HepG2 (cell line): ENCODE measurements at regions of chr6 and their contacts with region 1.

Region 1: GRCh38 chr6:33711140-33712129 is at the start of gene UQCC2:
- DNase-seq: peak; percentile 95
- ATAC-seq: peak; percentile 94
- H3K4me3 ChIP-seq: peak within 1 kb of the TSS; percentile 75 to 83 (median 75)
- H3K27ac ChIP-seq: peak within 1 kb of the TSS; percentile 93
- H3K4me1 ChIP-seq: peaks cover 63% of the 10 kb centered on the region
- H3K27me3 ChIP-seq: no peaks in the 10 kb centered on the region; a peak in 1 of 5 replicates
- CTCF ChIP-seq: peak; percentile 98
- EP300 ChIP-seq: no peak
- POLR2A ChIP-seq: peak; percentile 85 to 96
- RAD21 ChIP-seq: peak; percentile 97
- total RNA-seq, gene UQCC2: 238 and 273 TPM in 2 replicates

Region 2: DNA sequence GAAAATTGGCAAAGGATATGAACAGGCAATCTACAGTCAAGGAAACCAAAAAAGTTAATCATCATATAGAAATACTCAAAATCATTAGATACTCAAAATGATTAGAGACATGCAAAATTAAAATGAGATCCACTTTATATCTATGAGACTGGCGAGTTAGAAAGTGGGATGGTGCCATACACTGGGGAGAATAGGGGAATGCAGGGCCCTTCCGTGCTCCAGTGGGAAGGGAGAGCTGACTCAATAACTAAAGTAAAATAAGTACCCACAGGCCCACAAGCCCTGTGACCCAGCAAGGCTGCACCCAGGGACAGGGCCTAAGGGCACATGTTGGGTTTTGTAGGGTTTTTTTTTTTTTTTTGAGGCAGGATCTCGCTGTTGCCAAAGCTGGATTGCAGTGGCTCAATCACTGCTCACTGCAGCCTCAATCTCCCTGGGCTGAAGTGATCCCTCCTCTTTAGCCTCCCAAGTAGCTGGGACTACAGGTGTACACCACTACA is 176.3 kb before region 1 on chr6:
- CTCF ChIA-PET with region 1: no interaction called
- POLR2A ChIA-PET with region 1: no interaction called
- in situ Hi-C with region 1: no loop called
- intact Hi-C with region 1: no loop called
- DNase-seq: no peak
- ATAC-seq: peak; percentile 26; the same call in 1 of the 3 replicates
- H3K4me3 ChIP-seq: no peak overlapping the region
- H3K27ac ChIP-seq: no peak overlapping the region
- H3K4me1 ChIP-seq: peaks cover 34% of the 10 kb centered on the region
- H3K27me3 ChIP-seq: no peaks in the 10 kb centered on the region
- CTCF ChIP-seq: no peak
- EP300 ChIP-seq: no peak
- POLR2A ChIP-seq: no peak
- RAD21 ChIP-seq: no peak

Region 3: DNA sequence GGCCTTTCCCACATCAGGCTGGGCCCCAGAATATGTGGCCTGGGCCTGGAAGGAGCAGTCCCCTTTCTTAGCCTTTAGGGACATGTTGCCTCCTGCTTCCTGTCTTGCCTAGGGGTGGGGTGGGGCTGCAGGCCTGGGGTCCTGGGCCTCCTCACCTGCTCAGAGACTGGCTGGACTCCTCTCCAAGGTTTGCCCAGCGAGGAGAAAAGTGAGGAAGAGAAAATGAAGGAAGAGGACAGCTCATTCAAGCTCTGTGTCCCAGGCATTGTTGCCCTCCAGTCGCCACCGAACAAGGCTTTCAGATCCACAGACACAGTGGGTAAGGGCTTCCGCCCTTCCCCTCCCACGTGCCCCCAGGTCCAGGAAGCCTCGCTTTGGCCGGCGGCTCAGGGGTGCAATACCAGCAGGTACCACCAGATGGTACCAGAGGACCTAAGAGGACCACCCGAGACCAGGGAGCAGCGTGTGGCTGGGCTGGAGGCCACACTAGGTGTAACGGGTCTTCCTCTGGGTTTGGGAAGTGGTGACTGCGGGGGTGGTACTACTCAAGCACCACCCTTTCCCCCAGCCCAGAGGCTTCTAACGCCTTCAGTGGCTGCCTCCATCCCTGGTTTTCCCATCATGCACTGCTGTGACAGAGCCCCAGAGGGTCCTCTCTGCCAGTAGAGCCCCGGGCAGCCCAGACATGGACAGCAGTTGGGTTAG is 125.9 kb before region 1 on chr6:
- CTCF ChIA-PET with region 1: no interaction called
- POLR2A ChIA-PET with region 1: interaction called, 21 read pairs
- in situ Hi-C with region 1: no loop called
- intact Hi-C with region 1: no loop called
- DNase-seq: peak; percentile 72
- ATAC-seq: peak; percentile 29
- H3K4me3 ChIP-seq: peak overlapping the region in 1 of 3 experiments; percentile 36; a peak in 1 of 6 replicates
- H3K27ac ChIP-seq: no peak overlapping the region
- H3K4me1 ChIP-seq: peaks cover 53% of the 10 kb centered on the region
- H3K27me3 ChIP-seq: 0 out of 5 replicates have a peak, but pooled peaks cover 0 to 3% of the 10 kb centered on the region in 2 experiments
- CTCF ChIP-seq: peak; percentile 100
- EP300 ChIP-seq: no peak
- POLR2A ChIP-seq: no peak
- RAD21 ChIP-seq: peak; percentile 97

Region 4: GRCh38 chr6:33694401-33694931 is 17.0 kb before region 1 on chr6:
- CTCF ChIA-PET with region 1: no interaction called
- POLR2A ChIA-PET with region 1: interaction called, 11 read pairs
- in situ Hi-C with region 1: no loop called
- intact Hi-C with region 1: no loop called
- DNase-seq: no peak
- ATAC-seq: no peak
- H3K4me3 ChIP-seq: no peak overlapping the region
- H3K27ac ChIP-seq: no peak overlapping the region
- H3K4me1 ChIP-seq: no peaks in the 10 kb centered on the region
- H3K27me3 ChIP-seq: no peaks in the 10 kb centered on the region
- CTCF ChIP-seq: no peak
- EP300 ChIP-seq: no peak
- POLR2A ChIP-seq: no peak
- RAD21 ChIP-seq: no peak

Region 5: DNA sequence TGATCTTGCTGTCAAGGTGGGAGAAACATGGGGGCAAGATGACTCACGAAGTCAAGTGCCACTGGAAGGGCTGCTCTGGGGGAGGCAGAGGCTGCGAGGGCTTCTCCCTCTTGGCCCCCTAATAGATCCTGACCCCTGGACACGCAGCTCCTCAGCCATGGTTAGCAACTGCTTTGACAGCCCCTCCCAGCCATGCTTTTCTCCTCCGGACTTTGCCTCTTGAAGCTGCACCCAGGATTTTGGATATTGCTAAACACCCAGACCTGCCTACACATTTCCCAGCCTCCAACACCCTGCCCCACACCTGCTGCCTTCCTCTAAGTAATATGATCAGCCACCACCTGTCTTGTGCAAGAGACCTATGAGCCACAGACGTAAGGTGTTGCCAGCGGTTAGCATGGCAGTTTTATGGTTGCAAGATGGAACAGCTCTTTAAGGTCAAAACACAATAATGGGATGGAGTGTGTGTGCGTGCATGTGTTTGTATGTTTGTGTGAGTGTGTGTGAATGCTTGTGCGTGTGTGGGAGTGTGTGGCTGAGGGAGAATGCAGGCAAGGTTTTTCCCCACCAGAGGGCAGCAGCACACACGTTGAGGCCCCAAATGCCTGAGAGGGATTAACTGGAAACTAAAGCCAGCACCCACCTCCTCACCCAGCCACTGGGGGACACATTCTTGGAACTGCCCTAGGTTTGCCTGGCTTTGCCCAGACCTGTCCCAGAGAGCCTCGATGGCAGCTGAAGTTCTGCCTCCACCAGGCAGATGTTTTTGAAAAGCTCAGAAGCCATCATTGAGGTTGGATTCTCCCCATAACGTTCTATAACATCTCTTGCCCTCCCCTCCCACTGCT is 32.8 kb after region 1 on chr6:
- CTCF ChIA-PET with region 1: no interaction called
- POLR2A ChIA-PET with region 1: interaction called, 34 read pairs
- in situ Hi-C with region 1: no loop called
- intact Hi-C with region 1: loop called (anchors 1 kb)
- DNase-seq: peak; percentile 78
- ATAC-seq: peak; percentile 73
- H3K4me3 ChIP-seq: 0 out of 6 replicates have a peak overlapping the region, but pooled peaks of 1 of the 3 experiments have one; percentile 15
- H3K27ac ChIP-seq: no peak overlapping the region
- H3K4me1 ChIP-seq: peaks cover 58% of the 10 kb centered on the region
- H3K27me3 ChIP-seq: peaks cover 4 to 38% of the 10 kb centered on the region in 2 experiments; a peak in 4 of 5 replicates
- CTCF ChIP-seq: peak; percentile 98
- EP300 ChIP-seq: 0 out of 4 replicates have a peak, but pooled peaks of 1 of the 2 experiments have one; percentile 9
- POLR2A ChIP-seq: no peak
- RAD21 ChIP-seq: peak; percentile 87

Region 6: DNA sequence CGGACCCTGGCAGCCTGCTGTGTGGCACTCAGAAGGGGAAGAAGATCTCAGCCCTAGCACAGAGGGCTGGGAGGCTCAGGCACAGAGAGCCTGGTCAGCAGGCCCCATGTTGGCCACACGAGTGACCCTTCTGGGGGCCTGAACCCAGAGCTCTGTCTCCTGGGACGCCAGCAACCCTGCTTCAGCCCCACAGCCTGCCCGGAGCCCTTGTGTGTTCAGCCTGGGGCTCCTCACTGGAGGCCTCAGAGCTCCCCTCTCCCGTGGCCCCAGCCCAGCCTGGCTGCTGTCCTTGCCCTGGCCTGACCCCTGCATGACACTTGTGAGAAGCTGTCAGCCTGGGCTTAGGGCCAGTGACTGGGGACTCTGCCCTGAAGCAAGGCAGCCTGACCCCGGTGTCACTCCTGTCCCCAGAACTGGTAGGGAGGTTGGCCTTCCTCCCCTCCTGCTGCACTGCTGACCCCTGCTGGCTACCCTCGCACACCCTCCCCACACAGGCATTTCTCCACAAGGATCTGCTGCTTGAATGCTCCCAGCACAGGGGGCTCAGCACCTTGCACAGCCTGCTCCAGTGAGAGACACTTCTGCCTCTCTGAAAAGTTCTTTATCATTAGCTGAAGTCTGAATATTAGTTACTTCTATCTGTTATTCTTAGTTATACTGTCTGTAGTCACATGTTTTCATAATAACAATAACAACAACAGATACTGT is 50.6 kb after region 1 on chr6:
- CTCF ChIA-PET with region 1: interaction called, 13 read pairs
- POLR2A ChIA-PET with region 1: interaction called, 61 read pairs
- in situ Hi-C with region 1: loop called (anchors 5 kb)
- intact Hi-C with region 1: loop called (anchors 1 kb)
- DNase-seq: peak; percentile 87
- ATAC-seq: peak; percentile 92
- H3K4me3 ChIP-seq: peak overlapping the region in 1 of 3 experiments; percentile 41; a peak in 1 of 6 replicates
- H3K27ac ChIP-seq: peak overlapping the region; percentile 39
- H3K4me1 ChIP-seq: peaks cover 36% of the 10 kb centered on the region
- H3K27me3 ChIP-seq: peaks cover 7% of the 10 kb centered on the region in 2 experiments; a peak in 3 of 5 replicates
- CTCF ChIP-seq: peak; percentile 100
- EP300 ChIP-seq: peak in 1 of 2 experiments; percentile 72; a peak in 2 of 4 replicates
- POLR2A ChIP-seq: no peak; a peak in 1 of 4 replicates
- RAD21 ChIP-seq: peak; percentile 99

Region 7: GRCh38 chr6:33824461-33825154 is 113.2 kb after region 1 on chr6:
- CTCF ChIA-PET with region 1: no interaction called
- POLR2A ChIA-PET with region 1: no interaction called
- in situ Hi-C with region 1: no loop called
- intact Hi-C with region 1: no loop called
- DNase-seq: no peak
- ATAC-seq: no peak
- H3K4me3 ChIP-seq: no peak overlapping the region
- H3K27ac ChIP-seq: no peak overlapping the region
- H3K4me1 ChIP-seq: peaks cover 20% of the 10 kb centered on the region
- H3K27me3 ChIP-seq: peaks cover 0 to 18% of the 10 kb centered on the region in 2 experiments; a peak in 2 of 5 replicates
- CTCF ChIP-seq: no peak
- EP300 ChIP-seq: no peak
- POLR2A ChIP-seq: no peak
- RAD21 ChIP-seq: no peak